ENCODE measurements at regions of chr14 and their contacts with region 1.

Region 1: GRCh38 chr14:73759714-73760597 is 45.8 kb upstream of the PNMA1 start:
- DNase-seq: peak; percentile 99
- H3K4me3 ChIP-seq: peak overlapping the region; percentile 81 to 93 (median 83)
- H3K27ac ChIP-seq: peak overlapping the region; percentile 98 to 100 (median 99)
- H3K4me1 ChIP-seq: peaks cover 80 to 91% (median 88%) of the 10 kb centered on the region in 4 donors
- H3K27me3 ChIP-seq: no peaks in the 10 kb centered on the region
- CTCF ChIP-seq: peak in 1 of 3 experiments; percentile 28
- EP300 ChIP-seq: peak; percentile 66
- POLR2A ChIP-seq: peak; percentile 91

Region 2: GRCh38 chr14:73785873-73786695 is 26.1 kb after region 1 on chr14:
- intact Hi-C with region 1: loop called (anchors 2 kb)
- DNase-seq: peak; percentile 96
- H3K4me3 ChIP-seq: peak overlapping the region; percentile 66 to 89 (median 81)
- H3K27ac ChIP-seq: peak overlapping the region; percentile 97 to 99 (median 99)
- H3K4me1 ChIP-seq: peaks cover 77 to 89% (median 83%) of the 10 kb centered on the region in 4 donors
- H3K27me3 ChIP-seq: no peaks in the 10 kb centered on the region
- CTCF ChIP-seq: peak in 2 of 3 experiments; percentile 8 to 51
- EP300 ChIP-seq: peak; percentile 58
- POLR2A ChIP-seq: peak; percentile 76

Measured in esophagus muscularis mucosa (tissue), 4 donors.